Panc1 (cell line): ENCODE measurements at regions of chr3 and their contacts with region 1.

Region 1: DNA sequence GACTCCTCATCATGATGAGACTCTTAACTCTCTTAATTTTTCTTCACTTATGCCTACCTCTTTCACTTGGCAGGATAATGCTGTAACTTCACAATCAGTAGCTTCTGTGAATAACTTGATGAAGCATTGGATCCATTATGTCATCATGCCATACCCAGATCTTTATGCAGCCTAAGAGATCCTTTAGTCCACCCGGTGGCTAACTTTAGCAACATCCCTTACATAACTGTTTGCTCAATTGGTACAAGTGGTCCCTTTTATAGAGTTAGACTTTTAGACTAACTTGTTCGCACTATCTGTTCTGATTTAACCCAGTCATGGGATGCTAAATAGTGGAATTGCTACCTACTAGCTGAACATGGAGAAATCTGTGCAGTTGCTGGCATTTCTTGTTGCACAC is 184.5 kb downstream of the USP13 start:
- DNase-seq: no peak
- ATAC-seq: no peak
- H3K4me3 ChIP-seq: no peak overlapping the region
- H3K27ac ChIP-seq: no peak overlapping the region
- H3K4me1 ChIP-seq: no peaks in the 10 kb centered on the region
- H3K27me3 ChIP-seq: no peaks in the 10 kb centered on the region
- CTCF ChIP-seq: no peak

Region 2: DNA sequence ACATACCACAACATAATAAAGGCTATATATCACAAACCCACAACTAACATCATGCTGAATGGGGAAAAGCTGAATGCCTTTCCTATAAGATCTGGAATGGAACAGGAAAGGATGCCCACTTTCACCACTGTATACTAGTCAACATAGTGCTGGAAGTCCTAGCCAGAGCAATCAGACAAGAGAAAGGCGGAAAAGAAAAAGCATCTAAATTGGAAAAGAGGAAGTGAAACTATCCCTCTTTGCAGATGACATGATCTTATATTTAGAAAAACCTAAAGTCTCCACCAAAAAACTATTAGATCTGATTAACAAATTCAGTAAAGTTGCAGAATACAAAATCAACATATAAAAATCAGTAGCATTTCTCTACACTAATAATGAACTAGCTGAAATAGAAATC is 703.8 kb before region 1 on chr3:
- CTCF ChIA-PET with region 1: no interaction called
- POLR2A ChIA-PET with region 1: no interaction called
- in situ Hi-C with region 1: no loop called
- intact Hi-C with region 1: no loop called
- DNase-seq: no peak
- ATAC-seq: no peak
- H3K4me3 ChIP-seq: no peak overlapping the region
- H3K27ac ChIP-seq: no peak overlapping the region
- H3K4me1 ChIP-seq: no peaks in the 10 kb centered on the region
- H3K27me3 ChIP-seq: no peaks in the 10 kb centered on the region
- CTCF ChIP-seq: no peak

Region 3: DNA sequence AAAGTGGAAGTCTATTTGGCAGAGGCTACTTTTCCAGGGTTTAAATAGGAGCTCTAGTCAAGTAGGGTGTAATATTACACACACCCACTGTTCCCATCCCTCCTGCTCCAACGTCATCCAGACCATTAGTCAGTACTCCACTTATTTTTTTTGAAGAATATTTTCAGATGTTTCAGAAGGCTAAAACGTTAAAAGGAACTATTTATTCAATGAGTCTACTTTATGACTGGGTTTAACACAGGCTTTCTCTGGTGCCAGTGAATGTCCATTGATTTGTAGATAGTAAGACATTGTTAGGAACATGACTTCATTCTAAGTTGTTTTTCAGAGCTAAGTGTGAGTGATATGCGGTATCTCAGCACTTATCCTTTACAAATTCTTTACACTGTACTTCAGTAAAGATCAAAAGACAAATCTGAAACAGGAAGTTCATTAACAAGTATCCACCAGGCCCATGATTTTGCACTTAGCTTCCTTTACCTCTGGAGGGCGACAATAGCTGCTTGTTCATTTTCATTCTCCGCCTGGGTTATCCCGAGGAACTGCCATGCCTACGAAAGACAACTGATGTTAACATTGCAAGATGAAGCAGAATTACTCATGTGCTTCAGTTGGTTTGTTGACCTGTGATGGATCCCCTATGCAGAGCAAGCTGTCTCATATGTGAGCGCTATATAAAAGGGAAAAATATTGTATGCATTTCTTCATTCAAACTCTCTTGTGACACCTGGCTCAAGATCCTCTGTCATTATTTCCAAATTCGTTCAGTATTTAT is 25.9 kb before region 1 on chr3:
- CTCF ChIA-PET with region 1: no interaction called
- POLR2A ChIA-PET with region 1: interaction called, 10 read pairs
- in situ Hi-C with region 1: no loop called
- intact Hi-C with region 1: no loop called
- DNase-seq: peak; percentile 60
- ATAC-seq: peak; percentile 91
- H3K4me3 ChIP-seq: no peak overlapping the region
- H3K27ac ChIP-seq: no peak overlapping the region
- H3K4me1 ChIP-seq: no peaks in the 10 kb centered on the region
- H3K27me3 ChIP-seq: no peaks in the 10 kb centered on the region
- CTCF ChIP-seq: peak; percentile 86

Region 4: DNA sequence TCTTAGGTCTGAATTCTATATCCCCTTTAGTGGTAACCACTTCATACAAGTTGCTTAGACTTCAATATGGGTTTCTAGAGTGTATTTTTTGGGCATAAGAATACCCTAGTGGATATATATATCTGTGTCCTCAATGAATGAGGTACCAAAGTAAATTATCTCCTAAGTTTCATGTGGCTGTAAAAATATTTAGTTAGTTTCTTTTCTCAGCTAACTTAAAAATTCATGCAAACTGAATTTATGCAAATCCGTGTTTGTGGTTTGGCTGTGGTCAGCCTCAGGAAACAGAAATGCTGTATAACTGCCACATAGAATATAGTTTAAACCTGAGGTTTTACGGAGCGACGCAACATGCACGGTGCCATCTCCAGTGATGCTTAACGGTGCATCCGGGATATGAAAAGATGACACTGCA is 119.0 kb after region 1 on chr3:
- CTCF ChIA-PET with region 1: no interaction called
- POLR2A ChIA-PET with region 1: no interaction called
- in situ Hi-C with region 1: no loop called
- intact Hi-C with region 1: no loop called
- DNase-seq: no peak
- ATAC-seq: no peak
- H3K4me3 ChIP-seq: no peak overlapping the region
- H3K27ac ChIP-seq: no peak overlapping the region
- H3K4me1 ChIP-seq: no peaks in the 10 kb centered on the region
- H3K27me3 ChIP-seq: no peaks in the 10 kb centered on the region
- CTCF ChIP-seq: no peak

Region 5: DNA sequence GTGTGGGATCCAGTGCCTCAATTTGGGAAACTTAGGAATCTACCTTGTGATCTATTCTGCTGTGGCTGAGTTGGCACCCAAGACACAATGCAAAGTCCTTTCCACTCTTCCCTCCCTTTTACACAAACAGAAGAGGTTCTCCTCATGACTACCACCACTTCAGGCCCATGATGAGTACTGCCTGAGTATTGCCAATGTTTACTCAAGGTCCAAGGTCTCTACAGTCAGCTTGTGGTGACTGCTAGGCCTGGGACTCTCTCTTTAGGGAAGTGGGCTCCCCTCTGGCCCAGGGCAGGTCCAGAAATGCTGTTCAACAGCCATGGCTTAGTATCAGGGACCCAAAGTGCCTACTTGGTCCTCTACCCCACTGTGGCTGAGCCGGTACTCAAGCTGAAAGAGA is 256.2 kb after region 1 on chr3:
- CTCF ChIA-PET with region 1: no interaction called
- POLR2A ChIA-PET with region 1: no interaction called
- in situ Hi-C with region 1: no loop called
- intact Hi-C with region 1: no loop called
- DNase-seq: no peak
- ATAC-seq: no peak
- H3K4me3 ChIP-seq: no peak overlapping the region
- H3K27ac ChIP-seq: no peak overlapping the region
- H3K4me1 ChIP-seq: no peaks in the 10 kb centered on the region
- H3K27me3 ChIP-seq: no peaks in the 10 kb centered on the region
- CTCF ChIP-seq: no peak